ENCODE measurements at regions of chr2 and their contacts with region 1.

Region 1: GRCh38 chr2:230847883-230848388 is 16.8 kb upstream of the ITM2C start:
- DNase-seq: peak; percentile 70
- ATAC-seq: peak; percentile 94
- H3K4me3 ChIP-seq: peak overlapping the region in 1 of 3 experiments; percentile 35; a peak in 2 of 6 replicates
- H3K27ac ChIP-seq: no peak overlapping the region
- H3K4me1 ChIP-seq: peaks cover 14% of the 10 kb centered on the region
- H3K27me3 ChIP-seq: peaks cover 0 to 34% of the 10 kb centered on the region in 2 experiments; a peak in 3 of 5 replicates
- CTCF ChIP-seq: peak; percentile 92
- EP300 ChIP-seq: no peak
- POLR2A ChIP-seq: no peak
- RAD21 ChIP-seq: peak; percentile 86

Region 2: DNA sequence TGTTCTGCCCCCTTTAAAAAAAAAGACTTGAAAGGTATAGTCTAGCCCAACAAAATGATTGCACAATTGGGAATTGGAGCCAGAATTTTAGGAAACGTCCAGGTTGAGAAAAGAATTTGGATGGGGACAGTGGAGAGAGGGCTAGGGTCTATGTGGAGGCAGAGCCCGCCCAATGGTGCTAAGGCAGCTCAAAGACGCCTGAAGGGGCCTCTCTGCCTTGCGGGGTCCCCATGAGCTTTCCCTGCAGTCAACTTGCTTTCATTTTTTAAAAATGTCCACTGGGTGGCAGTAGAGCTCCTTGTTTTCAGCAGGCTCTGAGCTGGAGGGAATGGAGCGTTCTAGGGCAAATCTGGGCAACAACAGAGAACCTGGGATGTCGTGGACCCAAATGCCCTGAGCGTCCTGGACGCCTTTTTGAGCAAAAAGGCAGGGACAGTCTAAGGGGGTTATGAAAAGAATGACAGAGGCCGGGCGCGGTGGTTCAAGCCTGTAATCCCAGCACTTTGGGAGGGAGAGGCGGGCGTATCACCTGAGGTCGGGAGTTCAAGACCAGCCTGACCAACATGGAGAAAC is 23.4 kb before region 1 on chr2:
- CTCF ChIA-PET with region 1: interaction called, 25 read pairs
- POLR2A ChIA-PET with region 1: no interaction called
- in situ Hi-C with region 1: no loop called
- intact Hi-C with region 1: loop called (anchors 1 kb)
- DNase-seq: peak; percentile 87
- ATAC-seq: peak; percentile 91
- H3K4me3 ChIP-seq: peak overlapping the region in 2 of 3 experiments; percentile 28 to 36; a peak in 2 of 6 replicates
- H3K27ac ChIP-seq: no peak overlapping the region
- H3K4me1 ChIP-seq: no peaks in the 10 kb centered on the region
- H3K27me3 ChIP-seq: peaks cover 2 to 24% of the 10 kb centered on the region in 2 experiments; a peak in 4 of 5 replicates
- CTCF ChIP-seq: peak; percentile 89
- EP300 ChIP-seq: no peak
- POLR2A ChIP-seq: no peak
- RAD21 ChIP-seq: peak; percentile 81

Region 3: DNA sequence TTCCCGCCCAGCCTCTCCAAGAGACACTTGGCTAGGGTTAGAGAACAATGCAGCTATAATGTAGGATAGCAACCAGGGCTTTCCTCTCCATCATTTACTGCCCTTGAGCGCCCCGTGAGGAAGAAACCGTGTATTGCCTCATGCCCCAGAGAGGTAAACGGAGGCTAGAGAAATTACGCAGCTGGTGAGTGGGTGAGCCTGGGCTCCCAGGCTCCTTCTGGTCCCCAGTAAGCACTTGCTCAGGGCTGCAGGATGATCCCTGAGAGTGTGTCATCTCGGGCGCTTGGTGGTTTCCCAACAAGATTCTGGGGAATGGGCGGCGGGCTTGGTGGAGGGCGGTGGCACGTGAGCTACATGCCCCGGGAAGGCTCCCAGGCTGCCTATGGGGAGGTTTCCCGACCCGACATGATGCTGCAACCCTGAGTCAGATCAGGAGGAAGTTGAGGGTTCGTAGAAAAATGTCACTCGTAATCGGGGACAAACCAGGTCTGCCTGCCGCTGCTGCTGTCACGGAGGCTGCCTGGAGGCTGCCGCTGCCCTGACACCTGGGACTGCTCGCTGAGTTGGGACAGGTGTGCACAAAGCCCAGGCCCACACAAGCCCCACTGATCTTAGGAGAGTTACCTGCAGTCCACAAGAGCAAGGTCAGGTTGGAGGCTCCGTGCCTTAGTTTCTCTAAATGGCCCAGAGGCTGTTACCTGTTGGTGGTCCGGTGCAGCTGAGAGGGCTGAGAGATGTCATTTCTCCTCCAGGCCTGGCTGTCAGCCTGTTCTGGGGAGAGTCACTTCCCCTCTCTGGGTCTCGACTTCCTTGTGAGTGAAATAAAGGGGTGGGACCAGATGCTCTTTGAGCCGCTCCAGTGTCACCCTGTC is 76.8 kb after region 1 on chr2 and contains the start of gene GPR55:
- CTCF ChIA-PET with region 1: no interaction called
- POLR2A ChIA-PET with region 1: no interaction called
- in situ Hi-C with region 1: no loop called
- intact Hi-C with region 1: loop called (anchors 5 kb)
- DNase-seq: no peak
- ATAC-seq: peak; percentile 20
- H3K4me3 ChIP-seq: no peak within 1 kb of the TSS
- H3K27ac ChIP-seq: no peak within 1 kb of the TSS
- H3K4me1 ChIP-seq: no peaks in the 10 kb centered on the region
- H3K27me3 ChIP-seq: peaks cover 2 to 60% of the 10 kb centered on the region in 2 experiments; a peak in 4 of 5 replicates
- CTCF ChIP-seq: peak; percentile 30
- EP300 ChIP-seq: no peak
- POLR2A ChIP-seq: no peak
- RAD21 ChIP-seq: no peak
- total RNA-seq, gene GPR55: not detected in 2 replicates